ENCODE measurements at regions of chr17 and their contacts with region 1.

Region 1: GRCh38 chr17:45241328-45242011 is 19.8 kb downstream of the FMNL1 start:
- DNase-seq: peak; percentile 79
- ATAC-seq: peak; percentile 55
- H3K4me3 Mint-ChIP-seq: peak overlapping the region; percentile 77
- H3K27ac Mint-ChIP-seq: no peak overlapping the region
- H3K4me1 Mint-ChIP-seq: peaks cover 12% of the 10 kb centered on the region
- H3K27me3 Mint-ChIP-seq: peaks cover 48% of the 10 kb centered on the region
- CTCF ChIP-seq: no peak

Region 2: GRCh38 chr17:45228763-45229539 is 12.5 kb before region 1 on chr17:
- CTCF ChIA-PET with region 1: interaction called, 179 read pairs
- POLR2A ChIA-PET with region 1: interaction called, 4 read pairs
- DNase-seq: peak; percentile 59
- ATAC-seq: peak; percentile 27
- H3K4me3 Mint-ChIP-seq: no peak overlapping the region
- H3K27ac Mint-ChIP-seq: no peak overlapping the region
- H3K4me1 Mint-ChIP-seq: peaks cover 20% of the 10 kb centered on the region
- H3K27me3 Mint-ChIP-seq: peaks cover 26% of the 10 kb centered on the region
- CTCF ChIP-seq: no peak

Region 3: GRCh38 chr17:45852535-45853297 is 611.2 kb after region 1 on chr17:
- CTCF ChIA-PET with region 1: no interaction called
- POLR2A ChIA-PET with region 1: no interaction called
- DNase-seq: peak; percentile 76
- ATAC-seq: peak; percentile 65
- H3K4me3 Mint-ChIP-seq: no peak overlapping the region
- H3K27ac Mint-ChIP-seq: no peak overlapping the region
- H3K4me1 Mint-ChIP-seq: no peaks in the 10 kb centered on the region
- H3K27me3 Mint-ChIP-seq: peaks cover 5% of the 10 kb centered on the region
- CTCF ChIP-seq: peak; percentile 89

Measured in WTC11 (cell line).